ENCODE measurements at regions of chr19 and their contacts with region 1.

Region 1: GRCh38 chr19:56105090-56105701 is 15.9 kb downstream of the ZNF787 start:
- DNase-seq: peak; percentile 86 to 91 (median 89)
- ATAC-seq: peak; percentile 89
- H3K4me3 ChIP-seq: no peak overlapping the region
- H3K27ac ChIP-seq: peak overlapping the region; percentile 67 to 86 (median 71)
- H3K4me1 ChIP-seq: peaks cover 56% of the 10 kb centered on the region
- H3K27me3 ChIP-seq: no peaks in the 10 kb centered on the region
- CTCF ChIP-seq: peak; percentile 78 to 90 (median 88)
- POLR2A ChIP-seq: no peak

Region 2: GRCh38 chr19:56147307-56147706 is 42.1 kb after region 1 on chr19:
- intact Hi-C with region 1: loop called (anchors 5 kb)
- DNase-seq: peak in 3 of 4 donors; percentile 42 to 52 (median 43)
- ATAC-seq: peak; percentile 17
- H3K4me3 ChIP-seq: no peak overlapping the region
- H3K27ac ChIP-seq: peak overlapping the region; percentile 58 to 98 (median 94)
- H3K4me1 ChIP-seq: peaks cover 68% of the 10 kb centered on the region
- H3K27me3 ChIP-seq: no peaks in the 10 kb centered on the region
- CTCF ChIP-seq: no peak
- POLR2A ChIP-seq: no peak

Measured in body of pancreas (tissue), 4 donors.